ENCODE measurements at regions of chr14 and their contacts with region 1.

Region 1: DNA sequence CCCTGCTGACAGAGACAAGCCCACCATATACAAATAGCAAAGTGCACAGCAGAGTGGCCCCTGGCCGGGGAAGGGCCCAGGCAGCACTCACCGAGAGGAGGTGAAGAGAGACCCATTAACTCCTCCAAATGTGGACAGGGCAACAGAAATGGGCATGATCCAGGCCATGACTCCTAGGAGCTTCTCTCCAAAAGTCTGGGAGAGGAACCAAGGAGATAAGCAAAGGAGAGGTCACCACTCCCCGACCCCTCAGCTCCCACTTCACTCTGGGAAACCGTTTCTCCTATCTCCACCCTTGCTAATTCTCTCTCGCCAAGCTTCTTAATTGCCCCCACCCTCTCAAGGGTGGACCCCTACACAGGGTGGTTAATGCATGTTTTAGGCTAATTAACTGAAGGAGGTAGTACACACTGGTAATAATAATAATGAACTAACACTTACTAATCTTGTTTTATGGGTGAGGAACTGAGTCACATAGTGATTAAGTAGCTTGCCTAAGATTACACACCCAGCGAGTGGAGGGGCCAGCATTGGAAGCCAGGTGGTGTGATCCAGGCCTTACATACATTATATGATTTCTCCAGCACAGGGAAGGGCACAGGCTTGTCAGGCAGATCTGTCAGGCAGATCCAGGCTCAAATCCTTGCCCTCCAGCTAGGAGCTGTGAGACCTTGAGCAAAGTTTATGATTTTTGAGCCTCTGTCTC is 18.9 kb upstream of the CEBPE start:
- DNase-seq: no peak
- ATAC-seq: no peak
- H3K4me3 ChIP-seq: no peak overlapping the region
- H3K4me3 Mint-ChIP-seq: no peak overlapping the region
- H3K27ac ChIP-seq: no peak overlapping the region
- H3K27ac Mint-ChIP-seq: no peak overlapping the region
- H3K4me1 ChIP-seq: no peaks in the 10 kb centered on the region
- H3K4me1 Mint-ChIP-seq: no peaks in the 10 kb centered on the region
- H3K27me3 ChIP-seq: peaks cover 0 to 13% of the 10 kb centered on the region in 2 experiments
- H3K27me3 Mint-ChIP-seq: no peaks in the 10 kb centered on the region

Region 2: DNA sequence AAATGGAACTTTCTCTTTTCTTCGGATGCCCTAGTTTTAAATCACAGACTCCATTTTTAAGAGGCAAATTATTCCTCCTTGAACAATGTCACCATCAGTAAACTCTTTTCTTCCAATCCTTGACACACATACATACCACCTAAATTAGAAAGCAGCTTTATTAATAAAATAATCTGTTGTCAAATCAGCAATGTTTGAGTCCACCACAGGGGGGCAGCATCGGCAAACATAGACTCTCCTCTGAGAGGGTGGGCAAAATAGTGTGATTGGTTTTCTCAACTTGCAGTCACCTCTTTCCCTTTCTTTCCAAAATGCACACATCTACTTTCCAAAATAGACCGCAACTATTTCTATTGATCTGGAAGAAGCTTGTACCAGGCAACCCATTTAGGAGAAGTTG is 1026.0 kb before region 1 on chr14:
- CTCF ChIA-PET with region 1: no interaction called
- POLR2A ChIA-PET with region 1: no interaction called
- DNase-seq: peak in 25 of 35 experiments; percentile 6 to 65 (median 36)
- ATAC-seq: no peak
- H3K4me3 ChIP-seq: peak overlapping the region in 1 of 2 donors; percentile 17
- H3K4me3 Mint-ChIP-seq: peak overlapping the region; percentile 69 to 76 (median 73)
- H3K27ac ChIP-seq: no peak overlapping the region
- H3K27ac Mint-ChIP-seq: peak overlapping the region; percentile 72 to 84
- H3K4me1 ChIP-seq: peaks cover 0 to 7% of the 10 kb centered on the region in 2 experiments
- H3K4me1 Mint-ChIP-seq: peaks cover 14 to 18% (median 17%) of the 10 kb centered on the region in 3 donors
- H3K27me3 ChIP-seq: no peaks in the 10 kb centered on the region
- H3K27me3 Mint-ChIP-seq: peaks cover 0 to 4% of the 10 kb centered on the region in 2 donors

Region 3: DNA sequence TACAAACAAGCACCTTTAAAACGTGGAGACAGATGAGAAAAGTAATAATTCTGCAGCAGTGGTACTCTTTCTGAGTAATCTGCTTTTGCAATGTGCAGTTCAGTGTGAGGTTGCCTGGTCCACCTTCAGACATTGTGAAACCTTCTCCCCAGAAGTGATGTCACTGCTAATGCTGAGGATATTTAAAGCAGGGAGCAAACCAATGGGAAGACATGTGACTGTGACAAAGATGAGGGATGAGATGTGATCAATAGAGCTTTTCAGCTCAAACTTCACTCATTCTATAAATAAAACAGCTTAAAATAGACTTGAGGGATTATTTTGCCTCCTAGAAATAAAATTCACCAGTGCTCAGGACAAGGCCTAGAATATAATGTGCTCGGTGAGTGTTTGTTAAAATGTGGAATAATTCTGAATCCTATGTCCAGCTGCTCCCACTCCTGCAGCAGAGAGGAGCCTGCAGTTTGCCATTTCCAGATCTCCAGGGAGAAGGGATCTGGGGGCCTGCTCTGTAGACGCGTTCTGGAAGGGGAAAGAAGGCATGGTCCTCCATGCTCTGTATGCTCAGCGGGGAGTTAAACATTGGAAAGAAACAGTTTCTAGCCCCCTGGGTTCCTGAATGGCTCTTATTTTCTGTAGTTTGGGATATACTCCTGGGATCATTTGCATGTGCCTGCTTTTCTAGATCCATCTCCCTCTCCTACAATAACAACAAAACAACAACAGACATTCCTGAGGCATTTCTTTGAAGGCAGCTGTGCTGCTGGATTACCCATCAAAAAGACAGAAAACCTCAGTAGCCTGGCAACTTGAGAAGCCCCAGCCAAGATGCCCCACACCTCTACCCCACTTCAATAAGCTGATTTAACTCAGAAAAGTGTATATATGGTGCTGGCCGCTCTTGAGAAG is 36.5 kb after region 1 on chr14:
- CTCF ChIA-PET with region 1: interaction called, 3 to 10 read pairs
- POLR2A ChIA-PET with region 1: no interaction called
- DNase-seq: no peak
- ATAC-seq: no peak
- H3K4me3 ChIP-seq: no peak overlapping the region
- H3K4me3 Mint-ChIP-seq: no peak overlapping the region
- H3K27ac ChIP-seq: no peak overlapping the region
- H3K27ac Mint-ChIP-seq: no peak overlapping the region
- H3K4me1 ChIP-seq: peaks cover 5 to 6% of the 10 kb centered on the region in 2 experiments
- H3K4me1 Mint-ChIP-seq: peaks cover 14 to 55% (median 47%) of the 10 kb centered on the region in 3 donors
- H3K27me3 ChIP-seq: peaks cover 0 to 14% of the 10 kb centered on the region in 2 experiments
- H3K27me3 Mint-ChIP-seq: peaks cover 10 to 27% of the 10 kb centered on the region in 2 donors